CD4-positive, alpha-beta T cell (primary cell): ENCODE measurements at regions of chr1 and their contacts with region 1.

Region 1: GRCh38 chr1:155167166-155168104 is 5.7 kb downstream of the KRTCAP2 start:
- DNase-seq: peak; percentile 78 to 93 (median 84)
- ATAC-seq: peak; percentile 73
- H3K4me3 ChIP-seq: peak overlapping the region; percentile 9
- H3K4me3 Mint-ChIP-seq: peak overlapping the region; percentile 21
- H3K27ac ChIP-seq: no peak overlapping the region
- H3K27ac Mint-ChIP-seq: no peak overlapping the region
- H3K4me1 ChIP-seq: peaks cover 25% of the 10 kb centered on the region
- H3K4me1 Mint-ChIP-seq: peaks cover 26% of the 10 kb centered on the region
- H3K27me3 ChIP-seq: peaks cover 0 to 7% of the 10 kb centered on the region in 2 experiments
- H3K27me3 Mint-ChIP-seq: peaks cover 3% of the 10 kb centered on the region
- CTCF ChIP-seq: peak; percentile 81

Region 2: GRCh38 chr1:154772606-154773506 is 394.6 kb before region 1 on chr1:
- CTCF ChIA-PET with region 1: no interaction called
- POLR2A ChIA-PET with region 1: no interaction called
- intact Hi-C with region 1: no loop called
- DNase-seq: peak in 9 of 14 experiments; percentile 16 to 57 (median 39)
- ATAC-seq: peak; percentile 39
- H3K4me3 ChIP-seq: no peak overlapping the region
- H3K4me3 Mint-ChIP-seq: no peak overlapping the region
- H3K27ac ChIP-seq: no peak overlapping the region
- H3K27ac Mint-ChIP-seq: no peak overlapping the region
- H3K4me1 ChIP-seq: no peaks in the 10 kb centered on the region
- H3K4me1 Mint-ChIP-seq: no peaks in the 10 kb centered on the region
- H3K27me3 ChIP-seq: no peaks in the 10 kb centered on the region
- H3K27me3 Mint-ChIP-seq: no peaks in the 10 kb centered on the region
- CTCF ChIP-seq: peak; percentile 22

Region 3: GRCh38 chr1:155044812-155045690 is 122.4 kb before region 1 on chr1:
- CTCF ChIA-PET with region 1: interaction called, 7 read pairs
- POLR2A ChIA-PET with region 1: no interaction called
- intact Hi-C with region 1: loop called in 1 of 2 experiments (anchors 5 kb)
- DNase-seq: peak; percentile 42 to 85 (median 52)
- ATAC-seq: peak; percentile 93
- H3K4me3 ChIP-seq: no peak overlapping the region
- H3K4me3 Mint-ChIP-seq: no peak overlapping the region
- H3K27ac ChIP-seq: no peak overlapping the region
- H3K27ac Mint-ChIP-seq: no peak overlapping the region
- H3K4me1 ChIP-seq: peaks cover 7% of the 10 kb centered on the region
- H3K4me1 Mint-ChIP-seq: peaks cover 9% of the 10 kb centered on the region
- H3K27me3 ChIP-seq: no peaks in the 10 kb centered on the region
- H3K27me3 Mint-ChIP-seq: no peaks in the 10 kb centered on the region
- CTCF ChIP-seq: peak; percentile 72

Region 4: DNA sequence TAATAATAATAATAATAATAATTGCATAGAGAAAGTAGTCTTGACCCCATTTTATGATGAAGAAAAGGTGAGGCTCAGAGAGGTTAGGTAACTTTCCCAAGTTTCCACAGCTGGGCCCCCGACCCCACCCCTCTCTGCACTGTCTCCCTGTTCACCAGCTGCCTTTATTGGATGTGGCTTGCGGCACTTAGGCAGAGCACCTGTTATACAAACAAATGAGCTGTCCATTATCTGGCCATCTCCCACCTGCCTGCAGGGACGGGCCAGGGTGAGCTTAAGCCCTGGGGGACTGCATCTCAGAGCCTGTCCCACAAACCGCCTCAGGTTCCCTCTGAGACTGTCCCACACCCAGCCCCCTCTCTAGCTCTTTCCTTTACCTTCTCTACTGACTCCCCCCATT is 49.8 kb before region 1 on chr1:
- CTCF ChIA-PET with region 1: interaction called, 3 read pairs
- POLR2A ChIA-PET with region 1: no interaction called
- intact Hi-C with region 1: loop called in 1 of 2 experiments (anchors 2 kb)
- DNase-seq: no peak
- ATAC-seq: no peak
- H3K4me3 ChIP-seq: no peak overlapping the region
- H3K4me3 Mint-ChIP-seq: no peak overlapping the region
- H3K27ac ChIP-seq: no peak overlapping the region
- H3K27ac Mint-ChIP-seq: no peak overlapping the region
- H3K4me1 ChIP-seq: no peaks in the 10 kb centered on the region
- H3K4me1 Mint-ChIP-seq: no peaks in the 10 kb centered on the region
- H3K27me3 ChIP-seq: no peaks in the 10 kb centered on the region
- H3K27me3 Mint-ChIP-seq: peaks cover 5% of the 10 kb centered on the region
- CTCF ChIP-seq: no peak

Region 5: DNA sequence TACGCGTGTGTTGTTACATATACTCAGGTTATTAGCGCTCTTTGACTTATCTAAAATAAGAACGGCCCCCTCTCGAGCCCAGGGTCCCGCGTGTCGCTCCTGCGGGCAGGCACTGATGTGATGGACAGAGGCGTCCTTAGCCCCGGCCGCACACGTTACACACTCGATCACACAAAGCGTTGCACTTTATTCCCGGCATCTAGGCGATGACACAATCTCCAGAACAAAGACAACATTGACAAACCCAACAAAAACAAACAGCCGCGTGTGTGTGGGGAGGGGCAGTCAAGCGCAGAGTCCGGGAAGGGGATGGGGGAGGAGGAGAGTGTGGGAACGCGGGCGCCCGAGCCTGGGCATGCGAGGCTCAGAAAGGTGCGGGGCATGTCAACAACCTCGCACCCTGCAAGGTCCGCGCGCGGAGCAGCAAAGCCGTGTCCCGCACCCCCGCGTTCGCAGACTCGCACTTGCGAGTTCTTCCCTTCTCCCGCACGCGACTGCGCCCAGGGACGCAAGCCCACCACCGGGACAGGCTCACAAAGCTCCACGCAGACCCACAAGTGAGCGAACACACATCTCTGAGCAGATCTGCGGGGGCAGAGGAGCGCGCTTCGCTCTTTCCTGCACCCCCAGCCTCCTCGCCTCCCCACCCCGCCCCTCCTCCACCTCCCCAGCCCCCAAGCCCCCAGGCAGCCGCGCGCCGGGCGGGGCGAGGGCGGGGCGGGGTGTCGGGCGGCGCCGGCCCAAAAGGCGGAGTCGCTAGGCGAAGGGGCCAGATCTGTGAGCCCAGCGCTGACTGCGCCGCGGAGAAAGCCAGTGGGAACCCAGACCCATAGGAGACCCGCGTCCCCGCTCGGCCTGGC is 40.1 kb before region 1 on chr1 and contains the start of gene EFNA1:
- CTCF ChIA-PET with region 1: interaction called, 4 read pairs
- POLR2A ChIA-PET with region 1: interaction called, 6 read pairs
- intact Hi-C with region 1: loop called (anchors 5 kb)
- DNase-seq: peak in 10 of 14 experiments; percentile 18 to 62 (median 46)
- ATAC-seq: peak; percentile 32
- H3K4me3 ChIP-seq: peak within 1 kb of the TSS; percentile 59
- H3K4me3 Mint-ChIP-seq: peak within 1 kb of the TSS; percentile 82
- H3K27ac ChIP-seq: no peak within 1 kb of the TSS
- H3K27ac Mint-ChIP-seq: peak within 1 kb of the TSS; percentile 82
- H3K4me1 ChIP-seq: peaks cover 41% of the 10 kb centered on the region
- H3K4me1 Mint-ChIP-seq: peaks cover 38% of the 10 kb centered on the region
- H3K27me3 ChIP-seq: peaks cover 7 to 15% of the 10 kb centered on the region in 2 experiments
- H3K27me3 Mint-ChIP-seq: peaks cover 29% of the 10 kb centered on the region
- CTCF ChIP-seq: no peak
- total RNA-seq, gene EFNA1: 4.2 to 5.9 TPM

Region 6: DNA sequence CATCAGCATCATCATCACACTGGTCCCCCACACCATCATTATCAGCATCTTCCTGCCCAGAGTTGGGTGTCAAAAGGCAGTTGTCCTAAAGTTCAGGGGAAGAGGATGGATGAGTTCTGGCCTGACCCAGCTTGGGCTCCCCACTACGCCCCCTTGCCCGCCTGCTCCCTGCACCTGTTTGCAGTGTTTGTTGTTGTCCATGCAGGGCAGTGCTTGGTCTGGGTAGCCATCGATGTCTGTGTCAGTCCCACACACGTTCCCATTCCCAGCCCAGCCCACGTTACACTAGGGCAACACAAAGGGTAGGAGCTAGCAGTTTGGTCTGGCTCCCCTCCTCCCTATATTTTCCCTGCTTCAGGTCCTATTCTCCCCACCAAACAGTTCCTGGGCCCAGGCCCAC is 33.5 kb after region 1 on chr1:
- CTCF ChIA-PET with region 1: no interaction called
- POLR2A ChIA-PET with region 1: no interaction called
- intact Hi-C with region 1: no loop called
- DNase-seq: peak in 1 of 14 experiments; percentile 2
- ATAC-seq: no peak
- H3K4me3 ChIP-seq: no peak overlapping the region
- H3K4me3 Mint-ChIP-seq: no peak overlapping the region
- H3K27ac ChIP-seq: no peak overlapping the region
- H3K27ac Mint-ChIP-seq: no peak overlapping the region
- H3K4me1 ChIP-seq: no peaks in the 10 kb centered on the region
- H3K4me1 Mint-ChIP-seq: no peaks in the 10 kb centered on the region
- H3K27me3 ChIP-seq: no peaks in the 10 kb centered on the region
- H3K27me3 Mint-ChIP-seq: no peaks in the 10 kb centered on the region
- CTCF ChIP-seq: no peak

Region 7: DNA sequence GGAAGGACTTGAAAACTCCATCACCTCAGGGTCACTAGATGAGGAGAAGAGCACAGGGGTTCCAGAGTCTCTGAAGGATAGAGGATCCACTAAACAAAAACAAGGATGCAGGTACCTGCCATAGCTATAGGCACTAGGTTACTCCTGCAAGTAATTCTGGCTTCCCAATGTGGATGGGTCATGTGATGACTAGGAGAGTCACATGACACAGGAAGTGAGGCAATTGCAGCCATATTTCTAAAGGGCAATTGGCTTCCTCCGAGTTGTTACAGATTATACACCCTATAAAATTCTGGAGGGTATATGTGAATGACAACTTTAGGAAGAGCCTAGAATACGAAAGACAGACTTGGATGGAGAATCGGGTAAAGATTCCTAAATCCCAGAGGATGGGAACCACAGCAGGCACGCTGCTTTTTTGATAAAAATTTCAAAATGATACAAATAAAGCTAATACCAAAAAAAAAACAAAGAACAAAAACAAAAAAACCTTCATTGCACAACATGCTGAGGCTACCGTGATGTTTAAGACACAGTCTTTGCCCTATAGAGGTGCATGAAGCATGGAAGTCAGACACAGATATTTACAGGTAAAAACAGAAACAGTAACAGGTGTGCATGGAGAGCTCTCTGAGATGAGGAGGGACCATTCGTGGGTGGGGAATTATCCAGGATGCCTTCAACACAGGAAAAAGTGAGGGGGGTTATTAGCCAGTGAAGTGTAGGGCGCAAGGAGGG is 51.6 kb after region 1 on chr1:
- CTCF ChIA-PET with region 1: no interaction called
- POLR2A ChIA-PET with region 1: no interaction called
- intact Hi-C with region 1: no loop called
- DNase-seq: peak in 3 of 14 experiments; percentile 22 to 57 (median 39)
- ATAC-seq: no peak
- H3K4me3 ChIP-seq: no peak overlapping the region
- H3K4me3 Mint-ChIP-seq: no peak overlapping the region
- H3K27ac ChIP-seq: no peak overlapping the region
- H3K27ac Mint-ChIP-seq: peak overlapping the region; percentile 9
- H3K4me1 ChIP-seq: peaks cover 25% of the 10 kb centered on the region
- H3K4me1 Mint-ChIP-seq: peaks cover 17% of the 10 kb centered on the region
- H3K27me3 ChIP-seq: no peaks in the 10 kb centered on the region
- H3K27me3 Mint-ChIP-seq: no peaks in the 10 kb centered on the region
- CTCF ChIP-seq: no peak